ENCODE measurements at regions of chr7 and their contacts with region 1.

Region 1: GRCh38 chr7:143240291-143241168 is 18.7 kb downstream of the TAS2R40 start:
- DNase-seq: no peak
- ATAC-seq: peak; percentile 97
- H3K4me3 ChIP-seq: no peak overlapping the region
- H3K27ac ChIP-seq: no peak overlapping the region
- H3K4me1 ChIP-seq: no peaks in the 10 kb centered on the region
- H3K27me3 ChIP-seq: no peaks in the 10 kb centered on the region
- CTCF ChIP-seq: peak; percentile 82 to 95 (median 91)
- EP300 ChIP-seq: no peak
- POLR2A ChIP-seq: no peak
- RAD21 ChIP-seq: peak; percentile 92

Region 2: GRCh38 chr7:143181349-143181748 is 59.2 kb before region 1 on chr7:
- CTCF ChIA-PET with region 1: no interaction called
- POLR2A ChIA-PET with region 1: no interaction called
- RAD21 ChIA-PET with region 1: no interaction called
- SMC1A ChIA-PET with region 1: no interaction called
- in situ Hi-C with region 1: no loop called
- intact Hi-C with region 1: no loop called
- DNase-seq: no peak
- ATAC-seq: no peak
- H3K4me3 ChIP-seq: no peak overlapping the region
- H3K27ac ChIP-seq: no peak overlapping the region
- H3K4me1 ChIP-seq: no peaks in the 10 kb centered on the region
- H3K27me3 ChIP-seq: no peaks in the 10 kb centered on the region
- CTCF ChIP-seq: no peak
- EP300 ChIP-seq: no peak
- POLR2A ChIP-seq: no peak
- RAD21 ChIP-seq: no peak

Region 3: DNA sequence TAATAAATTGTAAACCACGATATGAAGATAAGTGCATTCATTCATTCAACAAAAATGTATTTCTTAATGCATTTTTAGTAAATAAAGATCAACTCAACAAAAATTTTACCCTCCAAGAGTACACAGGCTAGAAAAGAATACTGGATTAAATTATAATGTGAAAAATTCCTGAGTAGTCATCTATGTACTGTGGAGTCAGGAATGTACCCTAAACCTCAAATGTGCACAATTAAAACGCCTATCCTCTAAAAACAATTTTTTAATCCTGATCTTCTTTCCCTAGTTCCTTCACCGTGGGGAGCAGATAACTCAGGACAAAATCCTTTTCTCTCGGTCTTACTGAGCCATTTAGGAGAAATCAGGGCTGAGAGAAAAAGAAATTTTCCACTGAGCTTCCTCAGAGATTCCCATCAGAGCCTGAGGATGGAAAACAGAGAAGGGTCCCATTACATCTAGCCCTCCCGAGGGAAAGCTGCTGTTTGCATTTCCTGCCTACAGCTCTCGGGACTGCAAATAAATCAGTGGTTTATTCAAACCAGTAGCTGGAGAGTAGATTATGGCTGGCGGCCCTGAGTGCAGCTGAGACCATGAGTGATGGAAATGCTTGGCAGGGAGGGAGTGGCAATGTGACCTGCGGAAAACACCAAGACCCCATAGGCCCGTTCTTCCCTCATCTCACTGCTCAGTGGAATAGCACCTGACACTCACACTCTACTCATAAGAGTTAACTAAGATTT is 11.3 kb before region 1 on chr7:
- CTCF ChIA-PET with region 1: interaction called, 10 read pairs
- POLR2A ChIA-PET with region 1: no interaction called
- RAD21 ChIA-PET with region 1: interaction called, 7 read pairs
- SMC1A ChIA-PET with region 1: interaction called, 5 read pairs
- in situ Hi-C with region 1: no loop called
- intact Hi-C with region 1: no loop called
- DNase-seq: no peak
- ATAC-seq: no peak
- H3K4me3 ChIP-seq: no peak overlapping the region
- H3K27ac ChIP-seq: no peak overlapping the region
- H3K4me1 ChIP-seq: no peaks in the 10 kb centered on the region
- H3K27me3 ChIP-seq: no peaks in the 10 kb centered on the region
- CTCF ChIP-seq: no peak
- EP300 ChIP-seq: no peak
- POLR2A ChIP-seq: no peak
- RAD21 ChIP-seq: no peak

Region 4: GRCh38 chr7:143263266-143264195 is 23.0 kb after region 1 on chr7 and contains the start of gene GSTK1:
- CTCF ChIA-PET with region 1: interaction called, 16 read pairs
- POLR2A ChIA-PET with region 1: interaction called, 5 read pairs
- RAD21 ChIA-PET with region 1: interaction called, 4 read pairs
- SMC1A ChIA-PET with region 1: interaction called, 8 read pairs
- in situ Hi-C with region 1: no loop called
- intact Hi-C with region 1: no loop called
- DNase-seq: peak; percentile 21
- ATAC-seq: peak; percentile 99
- H3K4me3 ChIP-seq: peak within 1 kb of the TSS; percentile 79
- H3K27ac ChIP-seq: peak within 1 kb of the TSS; percentile 88
- H3K4me1 ChIP-seq: peaks cover 14% of the 10 kb centered on the region
- H3K27me3 ChIP-seq: no peaks in the 10 kb centered on the region
- CTCF ChIP-seq: no peak
- EP300 ChIP-seq: no peak; a peak in 1 of 4 replicates
- POLR2A ChIP-seq: peak; percentile 95
- RAD21 ChIP-seq: no peak
- polyA plus RNA-seq, gene GSTK1: 143 to 166 TPM

Region 5: DNA sequence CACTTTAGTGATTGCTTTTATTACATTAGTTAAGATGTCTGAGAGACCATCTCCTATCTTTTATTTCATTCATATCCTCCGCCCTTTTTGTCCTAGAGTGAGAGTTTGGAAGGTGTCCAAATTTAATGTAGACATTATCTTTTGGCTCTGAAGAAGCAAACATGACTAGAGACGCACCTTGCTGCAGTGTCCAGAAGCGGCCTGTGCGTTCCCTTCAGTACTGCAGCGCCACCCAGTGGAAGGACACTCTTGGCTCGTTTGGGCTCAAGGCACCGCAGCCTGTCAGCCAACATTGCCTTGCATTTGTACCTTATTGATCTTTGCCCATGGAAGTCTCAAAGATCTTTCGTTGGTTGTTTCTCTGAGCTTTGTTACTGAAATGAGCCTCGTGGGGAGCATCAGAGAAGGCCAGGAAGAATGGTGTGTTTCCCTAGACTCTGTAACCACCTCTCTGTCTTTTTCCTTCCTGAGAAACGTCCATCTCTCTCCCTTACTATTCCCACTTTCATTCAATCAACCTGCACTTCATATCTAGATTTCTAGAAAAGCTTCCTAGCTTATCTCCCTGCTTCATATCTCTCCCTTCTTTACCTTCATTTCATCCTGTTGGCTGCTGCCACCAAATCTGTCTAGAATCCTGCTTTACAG is 65.0 kb after region 1 on chr7:
- CTCF ChIA-PET with region 1: interaction called, 34 read pairs
- POLR2A ChIA-PET with region 1: no interaction called
- RAD21 ChIA-PET with region 1: interaction called, 5 read pairs
- SMC1A ChIA-PET with region 1: interaction called, 6 read pairs
- in situ Hi-C with region 1: no loop called
- intact Hi-C with region 1: loop called (anchors 1 kb)
- DNase-seq: no peak
- ATAC-seq: peak; percentile 86
- H3K4me3 ChIP-seq: no peak overlapping the region
- H3K27ac ChIP-seq: no peak overlapping the region
- H3K4me1 ChIP-seq: no peaks in the 10 kb centered on the region; the same call in 1 of the 2 replicates
- H3K27me3 ChIP-seq: no peaks in the 10 kb centered on the region
- CTCF ChIP-seq: peak; percentile 33 to 59 (median 43); a peak in 5 of 6 replicates
- EP300 ChIP-seq: no peak
- POLR2A ChIP-seq: no peak
- RAD21 ChIP-seq: peak; percentile 45

Region 6: GRCh38 chr7:143367972-143368371 is 127.4 kb after region 1 on chr7:
- CTCF ChIA-PET with region 1: interaction called, 10 read pairs
- POLR2A ChIA-PET with region 1: no interaction called
- RAD21 ChIA-PET with region 1: interaction called, 5 read pairs
- SMC1A ChIA-PET with region 1: interaction called, 7 read pairs
- in situ Hi-C with region 1: no loop called
- intact Hi-C with region 1: no loop called
- DNase-seq: no peak
- ATAC-seq: no peak
- H3K4me3 ChIP-seq: no peak overlapping the region
- H3K27ac ChIP-seq: no peak overlapping the region
- H3K4me1 ChIP-seq: no peaks in the 10 kb centered on the region
- H3K27me3 ChIP-seq: peaks cover 7 to 10% of the 10 kb centered on the region in 2 experiments
- CTCF ChIP-seq: no peak
- EP300 ChIP-seq: no peak
- POLR2A ChIP-seq: no peak
- RAD21 ChIP-seq: no peak

Region 7: DNA sequence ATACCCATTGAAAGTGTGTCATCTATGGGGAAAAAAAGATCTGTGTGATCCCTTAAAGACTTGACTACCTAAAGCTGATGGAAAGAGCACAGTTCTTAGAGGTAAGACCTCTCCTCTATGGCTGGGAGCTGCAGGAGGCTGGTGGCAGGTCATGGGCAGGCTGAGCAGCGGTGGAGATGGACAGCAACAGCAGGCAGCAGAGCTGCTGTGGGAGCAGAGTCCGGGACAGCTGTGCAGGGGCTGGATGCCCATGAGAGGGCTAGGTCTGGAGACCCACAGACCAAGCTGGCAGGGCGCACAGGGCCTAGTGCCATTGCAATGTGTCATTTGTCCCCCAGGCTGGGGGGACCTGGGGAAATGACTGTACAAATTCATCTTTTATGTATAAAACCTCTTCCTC is 181.5 kb after region 1 on chr7:
- CTCF ChIA-PET with region 1: interaction called, 124 read pairs
- POLR2A ChIA-PET with region 1: no interaction called
- RAD21 ChIA-PET with region 1: interaction called, 54 read pairs
- SMC1A ChIA-PET with region 1: interaction called, 73 read pairs
- in situ Hi-C with region 1: no loop called
- intact Hi-C with region 1: no loop called
- DNase-seq: no peak
- ATAC-seq: no peak
- H3K4me3 ChIP-seq: no peak overlapping the region
- H3K27ac ChIP-seq: no peak overlapping the region
- H3K4me1 ChIP-seq: no peaks in the 10 kb centered on the region
- H3K27me3 ChIP-seq: no peaks in the 10 kb centered on the region
- CTCF ChIP-seq: no peak
- EP300 ChIP-seq: no peak
- POLR2A ChIP-seq: no peak
- RAD21 ChIP-seq: no peak

Region 8: GRCh38 chr7:144127703-144128334 is 887.3 kb after region 1 on chr7:
- CTCF ChIA-PET with region 1: interaction called, 13 read pairs
- POLR2A ChIA-PET with region 1: no interaction called
- RAD21 ChIA-PET with region 1: interaction called, 11 read pairs
- SMC1A ChIA-PET with region 1: interaction called, 7 read pairs
- in situ Hi-C with region 1: no loop called
- intact Hi-C with region 1: loop called (anchors 10 kb)
- DNase-seq: peak; percentile 8
- ATAC-seq: peak; percentile 100
- H3K4me3 ChIP-seq: no peak overlapping the region
- H3K27ac ChIP-seq: no peak overlapping the region
- H3K4me1 ChIP-seq: no peaks in the 10 kb centered on the region
- H3K27me3 ChIP-seq: no peaks in the 10 kb centered on the region
- CTCF ChIP-seq: peak; percentile 87 to 92 (median 89)
- EP300 ChIP-seq: no peak
- POLR2A ChIP-seq: no peak
- RAD21 ChIP-seq: peak; percentile 93

Measured in GM12878 (cell line).